K562 (cell line): ENCODE measurements at regions of chr14 and their contacts with region 1.

Region 1: GRCh38 chr14:49971156-49972130 is 78.6 kb downstream of the ARF6 start:
- DNase-seq: peak in 1 of 4 experiments; percentile 23
- ATAC-seq: peak; percentile 15
- H3K4me3 ChIP-seq: no peak overlapping the region
- H3K27ac ChIP-seq: peak overlapping the region; percentile 90; the same call in 1 of the 3 replicates
- H3K4me1 ChIP-seq: peaks cover 0 to 32% of the 10 kb centered on the region in 2 experiments; a peak in 4 of 5 replicates
- H3K27me3 ChIP-seq: no peaks in the 10 kb centered on the region
- CTCF ChIP-seq: no peak
- EP300 ChIP-seq: no peak
- POLR2A ChIP-seq: no peak
- RAD21 ChIP-seq: no peak; a peak in 1 of 4 replicates

Region 2: DNA sequence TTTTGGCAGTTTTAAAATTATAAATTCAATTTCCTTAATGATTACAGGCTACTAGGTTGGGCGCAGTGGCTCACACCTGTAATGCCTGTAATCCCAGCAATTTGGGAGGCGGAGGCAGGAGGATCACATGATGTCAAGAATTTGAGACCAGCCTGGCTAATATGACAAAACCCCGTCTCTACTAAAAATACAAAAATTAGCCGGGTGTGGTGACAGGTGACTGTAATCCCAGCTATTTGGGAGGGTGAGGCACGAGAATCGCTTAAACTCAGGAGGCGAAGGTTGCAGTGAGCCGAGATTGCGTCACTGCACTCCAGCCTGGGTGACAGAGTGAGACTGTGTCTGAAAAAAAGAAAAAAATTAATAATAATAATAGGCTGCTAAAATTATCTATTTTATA is 95.7 kb before region 1 on chr14:
- CTCF ChIA-PET with region 1: no interaction called
- POLR2A ChIA-PET with region 1: no interaction called
- in situ Hi-C with region 1: no loop called
- intact Hi-C with region 1: no loop called
- DNase-seq: no peak
- ATAC-seq: no peak
- H3K4me3 ChIP-seq: no peak overlapping the region
- H3K27ac ChIP-seq: no peak overlapping the region
- H3K4me1 ChIP-seq: peaks cover 11 to 12% of the 10 kb centered on the region in 2 experiments
- H3K27me3 ChIP-seq: no peaks in the 10 kb centered on the region
- CTCF ChIP-seq: no peak
- EP300 ChIP-seq: no peak
- POLR2A ChIP-seq: no peak
- RAD21 ChIP-seq: no peak

Region 3: GRCh38 chr14:50003213-50004031 is 32.0 kb after region 1 on chr14:
- CTCF ChIA-PET with region 1: no interaction called
- POLR2A ChIA-PET with region 1: interaction called, 7 read pairs
- in situ Hi-C with region 1: no loop called
- intact Hi-C with region 1: loop called (anchors 1 kb)
- DNase-seq: peak; percentile 92 to 94 (median 94)
- ATAC-seq: peak; percentile 84
- H3K4me3 ChIP-seq: peak overlapping the region; percentile 46
- H3K27ac ChIP-seq: peak overlapping the region; percentile 92
- H3K4me1 ChIP-seq: peaks cover 50 to 54% of the 10 kb centered on the region in 2 experiments
- H3K27me3 ChIP-seq: no peaks in the 10 kb centered on the region
- CTCF ChIP-seq: peak in 1 of 3 experiments; percentile 36; a peak in 1 of 6 replicates
- EP300 ChIP-seq: peak; percentile 85
- POLR2A ChIP-seq: peak; percentile 75
- RAD21 ChIP-seq: peak; percentile 36 to 41; a peak in 3 of 4 replicates

Region 4: GRCh38 chr14:50060871-50061663 is 89.6 kb after region 1 on chr14:
- CTCF ChIA-PET with region 1: no interaction called
- POLR2A ChIA-PET with region 1: interaction called, 4 read pairs
- in situ Hi-C with region 1: no loop called
- intact Hi-C with region 1: loop called (anchors 2 kb)
- DNase-seq: peak; percentile 60 to 82 (median 71)
- ATAC-seq: peak; percentile 72
- H3K4me3 ChIP-seq: no peak overlapping the region
- H3K27ac ChIP-seq: peak overlapping the region; percentile 90
- H3K4me1 ChIP-seq: peaks cover 39 to 68% of the 10 kb centered on the region in 2 experiments
- H3K27me3 ChIP-seq: no peaks in the 10 kb centered on the region
- CTCF ChIP-seq: peak; percentile 8 to 17 (median 10); a peak in 1 of 6 replicates
- EP300 ChIP-seq: peak; percentile 81
- POLR2A ChIP-seq: no peak
- RAD21 ChIP-seq: no peak; a peak in 1 of 4 replicates